PC-9 (cell line): ENCODE measurements at regions of chr6 and their contacts with region 1.

Region 1: DNA sequence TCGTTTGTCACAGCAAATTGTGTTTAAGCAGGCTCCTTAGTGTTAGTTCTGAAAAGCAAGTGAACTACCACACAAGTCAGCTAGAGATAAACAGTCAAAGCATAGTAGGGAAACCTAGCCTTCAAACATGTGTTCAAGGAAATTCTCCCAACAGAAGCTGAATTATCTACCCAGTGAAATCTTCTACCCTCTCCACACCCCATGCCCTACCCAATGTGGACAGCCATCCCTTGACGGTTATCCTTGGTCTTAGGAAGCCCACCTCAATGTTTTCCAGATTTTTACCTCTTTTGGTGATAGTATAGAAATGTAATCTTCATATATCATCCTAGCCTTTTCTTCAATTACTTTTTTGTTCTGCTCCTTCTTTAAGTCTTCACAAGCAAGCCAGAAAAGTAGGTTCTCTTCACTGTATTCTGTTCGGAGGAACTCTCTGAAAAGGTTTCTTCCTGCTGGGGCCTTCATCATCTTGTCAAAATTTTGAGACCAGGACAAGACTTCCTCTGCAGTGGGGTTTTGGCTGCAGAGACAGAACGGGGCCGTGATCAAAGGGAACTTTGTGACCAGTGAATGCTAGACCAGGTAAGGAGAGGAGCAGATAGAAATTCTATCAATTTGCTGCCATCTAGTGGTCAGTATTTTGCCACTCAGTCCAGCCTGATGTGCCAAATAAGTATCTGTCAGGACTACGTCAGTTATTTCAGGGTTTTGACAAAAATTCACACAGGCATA is 21.6 kb upstream of the MTRF1L start:
- DNase-seq: peak in 1 of 2 experiments; percentile 11
- H3K4me3 ChIP-seq: no peak overlapping the region
- H3K27ac ChIP-seq: no peak overlapping the region
- H3K4me1 ChIP-seq: no peaks in the 10 kb centered on the region
- H3K27me3 ChIP-seq: no peaks in the 10 kb centered on the region
- CTCF ChIP-seq: peak; percentile 84

Region 2: DNA sequence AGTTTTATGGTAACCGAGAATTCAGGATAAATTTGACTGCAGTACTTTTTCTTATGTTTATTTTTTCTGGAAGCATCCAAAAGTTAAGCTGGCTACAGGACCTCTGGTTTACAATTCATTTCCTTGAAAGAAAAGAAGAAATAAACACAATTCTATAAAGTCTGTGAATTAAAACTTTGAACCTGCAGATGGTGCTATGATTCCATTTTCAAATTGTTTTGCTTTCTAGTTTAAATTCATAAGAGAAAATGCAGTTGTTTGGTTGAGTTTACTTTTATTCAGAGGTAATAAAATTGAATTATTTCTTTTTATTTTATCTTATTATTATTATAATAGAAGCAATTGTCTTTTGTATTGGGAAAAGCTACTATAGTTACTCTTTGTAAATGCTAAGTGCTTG is 275.3 kb before region 1 on chr6:
- CTCF ChIA-PET with region 1: no interaction called
- POLR2A ChIA-PET with region 1: no interaction called
- intact Hi-C with region 1: loop called (anchors 10 kb)
- DNase-seq: no peak
- H3K4me3 ChIP-seq: no peak overlapping the region
- H3K27ac ChIP-seq: no peak overlapping the region
- H3K4me1 ChIP-seq: 0 out of 2 replicates have a peak, but pooled peaks cover 6% of the 10 kb centered on the region
- H3K27me3 ChIP-seq: no peaks in the 10 kb centered on the region
- CTCF ChIP-seq: peak; percentile 41; the same call in 1 of the 2 replicates

Region 3: DNA sequence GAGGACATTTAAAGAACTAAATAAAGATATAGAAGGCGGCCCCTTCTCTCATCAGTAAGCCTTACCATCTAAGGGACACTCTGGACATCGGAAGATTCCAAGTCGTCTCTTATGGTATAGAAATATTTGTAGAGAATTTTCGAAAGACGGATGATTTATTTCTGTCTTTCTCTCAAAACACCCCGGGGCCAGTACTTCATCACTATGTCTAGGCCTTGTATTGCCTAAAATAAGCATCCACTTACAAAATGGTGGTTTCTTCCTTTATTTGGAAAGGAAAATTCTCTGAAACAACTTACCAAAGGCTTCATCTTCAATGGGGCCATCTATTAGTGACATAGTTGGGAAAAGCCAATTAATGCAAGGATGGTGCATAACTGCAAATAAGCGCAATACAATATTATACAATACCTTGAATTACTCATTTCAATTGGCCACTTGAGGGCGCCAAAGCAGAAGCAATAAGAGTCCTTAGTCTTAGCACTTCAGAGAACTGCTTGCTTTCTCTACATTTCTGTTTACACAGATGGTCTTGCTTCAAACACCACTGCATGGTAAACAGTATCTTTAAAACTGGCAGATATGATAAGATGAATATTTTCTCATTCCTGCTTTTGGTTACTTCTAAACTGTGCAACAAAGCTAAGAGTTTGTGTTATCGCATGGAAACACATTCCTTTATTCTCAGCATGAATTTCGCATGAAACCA is 160.4 kb before region 1 on chr6:
- CTCF ChIA-PET with region 1: no interaction called
- POLR2A ChIA-PET with region 1: no interaction called
- intact Hi-C with region 1: loop called (anchors 1 kb)
- DNase-seq: peak in 1 of 2 experiments; percentile 29
- H3K4me3 ChIP-seq: no peak overlapping the region
- H3K27ac ChIP-seq: no peak overlapping the region
- H3K4me1 ChIP-seq: no peaks in the 10 kb centered on the region
- H3K27me3 ChIP-seq: no peaks in the 10 kb centered on the region
- CTCF ChIP-seq: peak; percentile 84

Region 4: GRCh38 chr6:152954443-152954842 is 69.7 kb before region 1 on chr6:
- CTCF ChIA-PET with region 1: no interaction called
- POLR2A ChIA-PET with region 1: no interaction called
- intact Hi-C with region 1: loop called (anchors 2 kb)
- DNase-seq: no peak
- H3K4me3 ChIP-seq: no peak overlapping the region
- H3K27ac ChIP-seq: no peak overlapping the region
- H3K4me1 ChIP-seq: peaks cover 15% of the 10 kb centered on the region; the same call in 1 of the 2 replicates
- H3K27me3 ChIP-seq: no peaks in the 10 kb centered on the region
- CTCF ChIP-seq: peak; percentile 24; the same call in 1 of the 2 replicates

Region 5: GRCh38 chr6:153099636-153100035 is 75.5 kb after region 1 on chr6:
- CTCF ChIA-PET with region 1: no interaction called
- POLR2A ChIA-PET with region 1: no interaction called
- intact Hi-C with region 1: no loop called
- DNase-seq: no peak
- H3K4me3 ChIP-seq: no peak overlapping the region
- H3K27ac ChIP-seq: no peak overlapping the region
- H3K4me1 ChIP-seq: no peaks in the 10 kb centered on the region
- H3K27me3 ChIP-seq: no peaks in the 10 kb centered on the region
- CTCF ChIP-seq: no peak